ENCODE measurements at regions of chr17 and their contacts with region 1.

Region 1: DNA sequence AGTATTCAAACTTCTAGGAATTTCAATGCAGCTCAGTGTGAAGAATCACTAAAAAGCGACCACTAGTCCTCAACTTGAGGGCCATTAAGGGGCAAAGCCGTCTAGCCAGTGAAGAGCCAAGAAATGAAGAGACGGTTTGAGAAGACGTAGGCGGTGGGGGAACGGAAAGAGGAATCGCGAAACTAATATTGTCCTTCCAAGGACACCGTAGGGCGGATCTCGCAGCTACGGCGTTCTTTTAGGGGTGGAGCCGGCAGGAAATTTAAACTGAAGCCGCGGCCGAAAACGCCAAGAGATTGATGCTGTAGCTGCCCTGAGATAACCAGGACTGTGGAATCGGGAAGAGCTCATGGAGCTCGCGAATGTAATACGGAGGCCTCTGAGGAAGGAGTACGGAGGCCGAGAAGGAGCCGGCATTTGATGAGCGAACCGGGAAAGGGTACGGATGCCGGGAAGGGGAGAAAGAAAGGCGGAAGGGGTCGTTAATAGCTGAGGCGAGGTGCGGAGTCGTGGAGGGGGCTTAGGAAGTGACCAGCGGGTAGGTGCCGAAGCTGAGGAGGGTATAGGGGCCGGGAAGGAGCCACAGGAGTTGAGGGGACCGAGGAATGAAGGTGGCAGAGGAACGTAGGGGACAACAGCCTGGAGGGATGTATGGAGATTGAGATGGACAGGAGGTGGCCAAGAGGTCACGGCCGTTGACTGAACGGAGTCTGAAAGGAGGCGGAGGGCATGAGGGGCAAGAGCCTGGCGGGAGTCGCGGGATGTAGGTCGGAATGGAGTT is at the start of gene DBF4B:
- DNase-seq: peak; percentile 95
- ATAC-seq: peak; percentile 84
- H3K4me3 ChIP-seq: peak within 1 kb of the TSS; percentile 82
- H3K27ac ChIP-seq: peak within 1 kb of the TSS; percentile 68
- H3K4me1 ChIP-seq: peaks cover 14% of the 10 kb centered on the region
- H3K27me3 ChIP-seq: no peaks in the 10 kb centered on the region
- CTCF ChIP-seq: no peak
- total RNA-seq, gene DBF4B: 17.9 and 28.6 TPM in 2 replicates

Region 2: GRCh38 chr17:44689477-44690217 is 18.9 kb before region 1 on chr17 and contains the start of gene CCDC43:
- CTCF ChIA-PET with region 1: no interaction called
- POLR2A ChIA-PET with region 1: interaction called, 4 read pairs
- intact Hi-C with region 1: loop called (anchors 1 kb)
- DNase-seq: peak; percentile 96
- ATAC-seq: peak; percentile 97
- H3K4me3 ChIP-seq: peak within 1 kb of the TSS; percentile 92
- H3K27ac ChIP-seq: peak within 1 kb of the TSS; percentile 47
- H3K4me1 ChIP-seq: peaks cover 9% of the 10 kb centered on the region
- H3K27me3 ChIP-seq: no peaks in the 10 kb centered on the region
- CTCF ChIP-seq: no peak
- total RNA-seq, gene CCDC43: 50.4 and 51.0 TPM in 2 replicates

Measured in PC-3 (cell line).